Activated CD8-positive, alpha-beta T cell treated with anti-CD3 and anti-CD28 coated beads, Interleukin-2, amount 10 ng/mL, durations not matched to agents 7 days and 5 days (primary cell): ENCODE measurements at regions of chr4 and their contacts with region 1.

Region 1: DNA sequence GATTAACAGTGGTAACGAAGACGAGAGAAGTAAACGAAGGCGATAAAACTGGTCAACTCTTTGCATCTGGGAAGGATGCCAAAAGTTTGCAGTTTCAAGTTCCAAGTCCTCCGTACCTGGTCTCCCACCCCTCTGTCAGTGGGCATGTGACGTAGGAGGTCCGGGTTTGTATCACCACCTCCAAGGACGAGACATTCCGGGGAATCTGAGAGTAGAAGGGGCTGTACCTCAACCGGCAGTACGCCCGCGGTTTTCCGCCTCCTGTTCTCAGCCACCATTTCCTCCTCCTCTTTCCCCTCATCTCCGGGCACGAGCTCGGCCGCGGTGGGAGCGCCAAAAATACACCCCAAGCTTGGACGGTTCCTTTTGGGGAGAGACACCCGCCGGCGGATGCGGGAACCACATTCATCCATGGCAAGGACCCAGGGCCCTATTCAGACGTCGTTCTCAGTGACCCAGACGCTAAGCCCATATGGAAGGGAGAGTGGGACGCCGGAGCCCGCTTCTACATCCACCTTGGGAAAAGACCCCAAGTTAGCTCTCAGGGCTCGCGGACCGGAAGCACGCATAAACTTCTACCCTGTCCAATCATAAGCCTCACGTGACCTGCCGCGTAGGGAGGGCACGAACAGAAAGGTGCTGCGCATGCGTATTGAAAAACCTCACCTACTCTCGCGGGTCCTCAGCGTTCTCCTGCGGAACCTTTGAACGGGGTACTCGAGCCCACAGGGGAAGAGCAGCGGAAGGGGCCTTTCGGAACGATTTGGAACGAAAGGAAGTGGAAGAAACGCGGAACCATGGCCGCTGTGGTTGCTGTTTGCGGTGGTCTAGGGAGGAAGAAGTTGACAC is at the starts of genes HELQ and MRPS18C:
- DNase-seq: peak; percentile 99
- ATAC-seq: peak; percentile 93
- H3K4me3 Mint-ChIP-seq: peak within 1 kb of the TSS; percentile 100
- H3K27ac Mint-ChIP-seq: peak within 1 kb of the TSS; percentile 100
- H3K4me1 Mint-ChIP-seq: peaks cover 45% of the 10 kb centered on the region
- H3K27me3 Mint-ChIP-seq: no peaks in the 10 kb centered on the region
- total RNA-seq, gene HELQ: 17.5 to 18.6 TPM
- total RNA-seq, gene MRPS18C: 69.7 to 72.1 TPM

Region 2: GRCh38 chr4:83484500-83485461 is 29.3 kb after region 1 on chr4 and contains the start of gene ABRAXAS1:
- CTCF ChIA-PET with region 1: no interaction called
- POLR2A ChIA-PET with region 1: interaction called, 23 read pairs
- DNase-seq: peak; percentile 94
- ATAC-seq: peak; percentile 95
- H3K4me3 Mint-ChIP-seq: peak within 1 kb of the TSS; percentile 94
- H3K27ac Mint-ChIP-seq: peak within 1 kb of the TSS; percentile 94
- H3K4me1 Mint-ChIP-seq: peaks cover 17% of the 10 kb centered on the region
- H3K27me3 Mint-ChIP-seq: no peaks in the 10 kb centered on the region
- total RNA-seq, gene ABRAXAS1: 10.3 to 14.0 TPM

Region 3: GRCh38 chr4:83552924-83553323 is 97.4 kb after region 1 on chr4:
- CTCF ChIA-PET with region 1: no interaction called
- POLR2A ChIA-PET with region 1: no interaction called
- DNase-seq: no peak
- ATAC-seq: no peak
- H3K4me3 Mint-ChIP-seq: no peak overlapping the region
- H3K27ac Mint-ChIP-seq: no peak overlapping the region
- H3K4me1 Mint-ChIP-seq: peaks cover 33% of the 10 kb centered on the region
- H3K27me3 Mint-ChIP-seq: no peaks in the 10 kb centered on the region

Region 4: DNA sequence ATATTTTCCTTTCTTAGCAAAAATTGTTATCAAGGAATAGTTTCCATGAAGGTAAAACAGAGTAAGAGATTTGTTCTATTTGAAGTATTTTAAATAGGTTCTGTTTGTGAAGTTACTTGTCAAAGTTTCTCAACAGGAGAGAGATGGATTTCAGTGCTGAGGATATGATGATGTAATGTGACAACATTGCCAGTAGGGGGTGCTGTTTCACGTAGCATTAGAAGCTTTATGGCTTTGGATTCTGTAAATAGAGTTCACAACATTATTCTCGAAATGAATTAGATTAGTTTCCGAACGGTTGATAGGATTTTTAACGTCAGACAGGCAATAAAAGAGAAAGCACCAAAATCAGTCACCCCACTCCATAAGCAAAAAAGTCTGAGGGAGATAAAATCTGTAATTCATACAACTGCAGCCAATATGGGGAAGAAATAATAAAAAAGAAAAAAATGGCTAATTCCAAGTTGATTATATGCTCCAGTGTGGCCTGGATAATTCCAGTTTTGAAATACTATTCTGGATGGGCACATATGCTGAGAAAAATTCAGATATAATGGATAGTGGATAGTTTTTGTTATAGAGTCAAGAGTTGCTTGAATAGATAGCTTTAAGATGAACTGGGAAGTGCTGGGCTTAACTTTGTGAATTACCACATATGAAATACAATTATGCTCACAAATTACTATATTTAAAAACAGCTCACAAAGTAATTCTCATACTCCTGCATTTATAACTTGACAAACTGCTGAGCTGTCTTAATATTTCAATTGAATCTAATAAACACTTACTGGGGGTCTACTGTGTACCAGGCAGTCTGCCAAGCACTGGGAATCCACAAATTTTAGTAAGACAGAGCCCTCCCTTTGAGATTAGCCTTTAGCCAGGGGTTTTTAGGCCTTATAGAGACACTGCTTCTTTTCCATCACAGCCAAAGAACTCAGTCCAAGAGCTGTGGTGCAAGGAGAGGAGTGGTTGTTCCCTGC is 189.5 kb after region 1 on chr4:
- CTCF ChIA-PET with region 1: no interaction called
- POLR2A ChIA-PET with region 1: no interaction called
- DNase-seq: peak; percentile 65
- ATAC-seq: no peak
- H3K4me3 Mint-ChIP-seq: no peak overlapping the region
- H3K27ac Mint-ChIP-seq: no peak overlapping the region
- H3K4me1 Mint-ChIP-seq: no peaks in the 10 kb centered on the region
- H3K27me3 Mint-ChIP-seq: peaks cover 13% of the 10 kb centered on the region